ENCODE measurements at regions of chr6 and their contacts with region 1.

Region 1: GRCh38 chr6:116352515-116353471 is 18.0 kb upstream of the DSE start:
- H3K4me3 ChIP-seq: no peak overlapping the region
- H3K27ac ChIP-seq: no peak overlapping the region
- H3K4me1 ChIP-seq: no peaks in the 10 kb centered on the region
- CTCF ChIP-seq: no peak

Region 2: DNA sequence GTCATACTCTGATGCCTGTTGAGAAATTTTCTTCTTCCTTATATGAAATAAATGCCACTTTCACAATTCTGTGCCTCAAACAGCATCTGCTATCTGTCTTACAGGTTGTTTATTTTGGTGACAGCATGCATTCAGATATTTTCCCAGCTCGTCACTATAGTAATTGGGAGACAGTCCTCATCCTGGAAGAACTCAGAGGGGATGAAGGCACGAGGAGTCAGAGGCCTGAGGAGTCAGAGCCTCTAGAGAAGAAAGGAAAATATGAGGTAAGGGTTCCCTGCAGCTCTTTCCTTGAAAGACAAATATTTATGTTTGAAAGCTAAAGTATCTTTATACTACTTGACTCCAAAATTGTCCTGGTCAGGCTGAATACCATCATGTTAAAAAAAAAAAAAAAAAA is 114.7 kb before region 1 on chr6:
- CTCF ChIA-PET with region 1: no interaction called
- POLR2A ChIA-PET with region 1: no interaction called
- H3K4me3 ChIP-seq: no peak overlapping the region
- H3K27ac ChIP-seq: no peak overlapping the region
- H3K4me1 ChIP-seq: no peaks in the 10 kb centered on the region
- CTCF ChIP-seq: no peak

Region 3: DNA sequence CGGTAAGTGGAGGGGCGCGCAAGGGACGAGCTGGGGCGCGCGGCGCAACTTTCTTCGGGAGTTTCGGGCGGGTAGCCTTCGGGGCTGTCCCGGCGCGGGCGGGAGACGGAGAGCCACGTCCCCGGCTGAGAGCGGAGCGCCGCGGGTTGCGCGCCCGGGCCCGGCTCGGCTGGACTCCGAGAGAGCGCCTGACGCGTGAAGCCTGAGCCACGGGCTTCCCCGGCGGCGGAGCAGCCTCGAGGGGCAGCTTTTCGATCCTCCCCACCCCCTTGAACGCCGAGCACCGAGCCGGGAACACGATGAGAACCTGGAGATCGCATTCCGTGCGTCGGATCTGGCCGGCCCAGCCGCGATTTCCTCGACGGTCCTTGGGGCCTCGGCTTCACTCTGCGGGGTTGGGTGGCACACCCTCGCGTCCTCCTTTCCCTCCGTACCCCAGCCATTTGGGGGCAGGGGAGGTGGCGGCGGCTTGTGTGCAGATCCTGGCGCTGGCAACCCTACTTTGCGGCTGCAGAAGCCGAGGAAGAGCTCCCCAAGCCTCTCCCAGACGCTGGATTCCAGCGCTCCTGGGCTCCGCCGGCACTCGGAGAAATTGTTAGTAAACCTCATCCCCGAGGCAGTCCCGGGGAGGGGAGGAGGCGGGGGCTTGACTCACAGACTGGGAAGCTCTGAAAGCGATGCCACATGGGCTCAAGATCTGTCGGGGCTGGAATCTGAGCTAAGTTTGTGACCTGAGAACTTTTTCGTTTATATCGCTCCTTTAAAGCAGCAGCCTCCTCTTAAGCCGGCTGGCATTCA is 18.5 kb after region 1 on chr6:
- CTCF ChIA-PET with region 1: no interaction called
- POLR2A ChIA-PET with region 1: interaction called, 11 read pairs
- H3K4me3 ChIP-seq: peak overlapping the region; percentile 87
- H3K27ac ChIP-seq: peak overlapping the region; percentile 96
- H3K4me1 ChIP-seq: peaks cover 3% of the 10 kb centered on the region; the same call in 1 of the 2 replicates
- CTCF ChIP-seq: peak; percentile 48

Region 4: DNA sequence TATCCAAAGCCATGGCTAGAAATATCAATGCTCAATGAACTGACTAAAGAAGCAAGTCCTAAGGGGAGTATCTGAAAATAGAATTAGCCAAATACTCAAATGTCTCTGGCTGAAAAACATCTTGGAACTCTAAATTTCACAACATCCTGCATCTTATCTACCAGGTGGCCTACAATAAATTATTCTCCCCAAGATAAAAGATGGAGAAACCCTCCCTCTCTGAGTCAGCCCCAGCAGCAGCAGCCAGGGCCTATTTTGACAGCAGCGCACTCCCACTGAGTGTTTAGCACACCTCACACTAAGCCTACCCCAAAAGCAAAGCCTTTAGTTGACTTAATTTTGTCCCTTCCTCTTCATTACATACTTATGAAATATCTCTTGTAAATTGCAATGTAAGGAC is 114.3 kb after region 1 on chr6:
- CTCF ChIA-PET with region 1: no interaction called
- POLR2A ChIA-PET with region 1: no interaction called
- H3K4me3 ChIP-seq: no peak overlapping the region
- H3K27ac ChIP-seq: no peak overlapping the region
- H3K4me1 ChIP-seq: no peaks in the 10 kb centered on the region
- CTCF ChIP-seq: no peak